ENCODE measurements at regions of chr5 and their contacts with region 1.

Region 1: DNA sequence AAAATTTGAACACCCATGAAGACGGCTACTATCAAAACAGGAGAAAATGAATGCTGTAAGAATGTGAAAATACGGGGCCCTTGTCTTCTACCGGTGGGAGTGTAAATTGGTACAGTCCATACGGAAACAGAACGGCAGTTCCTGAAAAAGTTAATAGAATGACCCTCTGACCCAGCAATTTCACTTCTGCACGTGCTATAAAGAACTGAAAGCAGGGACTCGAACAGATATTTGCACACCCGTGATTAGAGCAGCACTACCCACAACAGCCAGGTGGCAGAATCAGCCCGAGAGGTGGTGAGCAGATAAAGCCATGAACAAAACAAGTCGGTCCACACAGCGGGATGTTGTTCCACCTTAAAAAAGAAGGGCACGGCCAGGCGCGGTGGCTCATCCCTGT is 22.6 kb upstream of the SLC12A7 start:
- DNase-seq: peak; percentile 74
- ATAC-seq: peak; percentile 88
- H3K4me3 ChIP-seq: no peak overlapping the region; the same call in 1 of the 2 replicates
- H3K27ac ChIP-seq: peak overlapping the region; percentile 60
- H3K4me1 ChIP-seq: peaks cover 21% of the 10 kb centered on the region
- H3K27me3 ChIP-seq: no peaks in the 10 kb centered on the region
- CTCF ChIP-seq: peak; percentile 48 to 60 (median 56); a peak in 5 of 6 replicates
- EP300 ChIP-seq: no peak
- POLR2A ChIP-seq: no peak
- RAD21 ChIP-seq: peak; percentile 51

Region 2: GRCh38 chr5:885529-885928 is 248.9 kb before region 1 on chr5:
- CTCF ChIA-PET with region 1: no interaction called
- POLR2A ChIA-PET with region 1: no interaction called
- RAD21 ChIA-PET with region 1: no interaction called
- SMC1A ChIA-PET with region 1: no interaction called
- in situ Hi-C with region 1: no loop called
- intact Hi-C with region 1: no loop called
- DNase-seq: no peak
- ATAC-seq: no peak
- H3K4me3 ChIP-seq: no peak overlapping the region
- H3K27ac ChIP-seq: no peak overlapping the region
- H3K4me1 ChIP-seq: no peaks in the 10 kb centered on the region
- H3K27me3 ChIP-seq: no peaks in the 10 kb centered on the region
- CTCF ChIP-seq: no peak
- EP300 ChIP-seq: no peak
- POLR2A ChIP-seq: no peak
- RAD21 ChIP-seq: no peak

Region 3: GRCh38 chr5:1093361-1093760 is 41.1 kb before region 1 on chr5:
- CTCF ChIA-PET with region 1: no interaction called
- POLR2A ChIA-PET with region 1: no interaction called
- RAD21 ChIA-PET with region 1: no interaction called
- SMC1A ChIA-PET with region 1: no interaction called
- in situ Hi-C with region 1: no loop called
- intact Hi-C with region 1: no loop called
- DNase-seq: no peak
- ATAC-seq: no peak
- H3K4me3 ChIP-seq: no peak overlapping the region
- H3K27ac ChIP-seq: no peak overlapping the region
- H3K4me1 ChIP-seq: no peaks in the 10 kb centered on the region
- H3K27me3 ChIP-seq: no peaks in the 10 kb centered on the region
- CTCF ChIP-seq: no peak
- EP300 ChIP-seq: no peak
- POLR2A ChIP-seq: no peak
- RAD21 ChIP-seq: no peak

Region 4: DNA sequence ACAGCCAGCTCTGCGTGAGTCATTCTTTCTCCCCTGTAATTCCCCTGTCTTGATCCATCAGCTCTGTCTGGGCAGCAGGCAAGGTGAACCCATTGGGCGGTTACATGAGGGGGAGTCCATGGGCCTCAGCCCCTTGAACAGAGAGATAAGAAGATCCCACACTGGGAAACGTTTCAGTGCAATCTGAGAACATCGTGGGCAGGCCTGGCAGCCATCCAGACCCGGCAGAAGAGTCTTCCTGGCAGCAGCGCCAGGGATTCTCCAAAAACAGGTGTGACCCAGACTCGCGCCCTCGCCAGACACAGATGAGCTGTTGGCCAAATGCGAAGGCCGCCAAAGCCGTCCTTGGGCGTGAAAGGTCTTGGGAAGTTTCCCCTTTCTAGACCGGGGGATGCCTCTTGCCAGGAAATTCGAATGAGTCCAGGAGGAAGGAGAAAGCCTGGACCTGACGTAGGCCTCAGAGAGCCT is 16.2 kb before region 1 on chr5:
- CTCF ChIA-PET with region 1: interaction called, 25 read pairs
- POLR2A ChIA-PET with region 1: interaction called, 18 read pairs
- RAD21 ChIA-PET with region 1: interaction called, 27 read pairs
- SMC1A ChIA-PET with region 1: interaction called, 9 read pairs
- in situ Hi-C with region 1: no loop called
- intact Hi-C with region 1: no loop called
- DNase-seq: no peak
- ATAC-seq: no peak
- H3K4me3 ChIP-seq: no peak overlapping the region
- H3K27ac ChIP-seq: no peak overlapping the region
- H3K4me1 ChIP-seq: no peaks in the 10 kb centered on the region
- H3K27me3 ChIP-seq: peaks cover 0 to 2% of the 10 kb centered on the region in 2 experiments
- CTCF ChIP-seq: no peak
- EP300 ChIP-seq: no peak
- POLR2A ChIP-seq: no peak
- RAD21 ChIP-seq: no peak

Region 5: DNA sequence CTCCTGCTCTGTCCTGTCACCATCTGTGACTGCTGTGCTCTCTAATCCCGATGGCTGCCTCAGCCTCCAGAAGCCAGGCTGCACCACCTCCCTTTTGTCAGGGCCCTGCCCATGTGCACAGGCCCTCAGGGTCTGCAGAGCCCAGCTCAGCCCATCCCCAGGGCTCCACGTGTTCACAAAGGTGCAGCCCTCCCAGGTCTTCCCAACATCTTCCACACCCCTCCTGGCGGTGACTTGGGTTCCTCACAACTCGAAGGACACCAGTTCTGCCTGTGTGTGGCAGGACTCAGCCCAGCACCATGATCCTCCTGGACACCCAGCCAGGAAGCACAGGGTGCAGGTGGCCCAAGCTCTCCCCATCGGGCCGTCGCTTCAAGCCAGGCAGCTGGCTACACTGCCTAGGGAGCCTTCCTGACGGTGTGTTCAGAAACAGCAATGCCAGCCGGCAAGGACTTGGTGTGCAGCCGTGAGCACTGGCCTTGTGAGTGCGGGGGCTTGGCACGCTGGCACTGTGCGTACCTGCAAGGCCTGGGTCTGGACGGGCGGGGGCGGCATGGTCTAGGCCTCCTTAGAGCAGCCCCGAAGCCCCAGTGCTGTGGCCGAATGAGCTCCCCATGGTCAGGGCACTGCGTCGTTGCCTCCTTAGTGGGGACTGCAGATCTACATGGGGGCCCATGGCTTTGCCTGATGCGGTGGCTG is 569.0 kb after region 1 on chr5:
- CTCF ChIA-PET with region 1: no interaction called
- POLR2A ChIA-PET with region 1: no interaction called
- RAD21 ChIA-PET with region 1: no interaction called
- SMC1A ChIA-PET with region 1: no interaction called
- in situ Hi-C with region 1: no loop called
- intact Hi-C with region 1: no loop called
- DNase-seq: no peak
- ATAC-seq: no peak
- H3K4me3 ChIP-seq: no peak overlapping the region
- H3K27ac ChIP-seq: no peak overlapping the region
- H3K4me1 ChIP-seq: no peaks in the 10 kb centered on the region
- H3K27me3 ChIP-seq: peaks cover 2 to 4% of the 10 kb centered on the region in 2 experiments; a peak in 3 of 4 replicates
- CTCF ChIP-seq: no peak
- EP300 ChIP-seq: no peak
- POLR2A ChIP-seq: no peak
- RAD21 ChIP-seq: no peak